AG04449 (cell line): ENCODE measurements at regions of chr5 and their contacts with region 1.

Region 1: DNA sequence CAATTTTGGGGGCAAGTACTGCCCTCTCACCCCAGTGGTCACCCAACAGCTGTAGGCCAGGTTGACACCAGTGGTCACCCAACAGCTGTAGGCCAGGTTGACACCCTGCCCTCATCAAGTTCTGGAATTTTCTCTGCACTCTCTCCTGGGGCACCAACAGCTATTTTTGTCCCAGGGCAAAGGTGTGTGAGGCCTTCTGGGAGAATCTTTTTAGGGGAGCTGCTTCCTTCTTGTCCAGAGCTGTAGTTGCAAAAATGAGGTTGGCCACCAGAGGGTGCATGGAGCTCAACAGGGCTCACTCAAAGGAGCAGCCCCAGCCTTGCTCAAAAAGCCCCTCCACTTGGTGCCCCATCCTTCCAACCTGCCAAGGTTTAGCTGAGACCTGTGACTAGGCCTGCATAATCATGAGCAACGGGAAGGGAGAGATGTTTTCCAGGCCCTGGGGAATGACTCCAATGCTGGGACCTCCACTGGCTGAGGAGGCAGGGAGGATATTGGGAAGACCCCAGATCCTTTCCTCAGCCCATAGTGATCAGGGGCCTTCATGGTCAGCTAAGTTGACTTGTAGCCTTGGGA is 10.6 kb upstream of the P4HA2 start:
- DNase-seq: no peak
- H3K4me3 ChIP-seq: no peak overlapping the region
- CTCF ChIP-seq: peak; percentile 85

Region 2: DNA sequence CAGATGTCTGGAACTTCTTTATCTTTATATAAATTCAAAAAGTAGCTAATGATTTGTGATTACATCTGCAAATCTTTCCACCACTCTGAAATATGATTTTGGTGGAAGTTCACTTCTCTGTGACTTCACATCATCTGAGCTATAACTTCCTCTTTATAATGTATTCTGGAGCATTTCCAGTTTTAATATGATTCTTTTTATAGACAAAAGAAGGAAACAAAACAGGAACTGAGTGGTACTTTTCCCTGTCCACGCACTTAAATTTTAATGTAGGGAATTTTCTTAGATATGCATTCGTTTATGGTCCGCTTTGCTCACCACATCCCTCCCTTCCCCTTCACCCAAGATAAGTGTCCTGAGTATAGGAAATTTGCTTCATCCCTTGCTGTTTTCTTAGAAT is 2000.5 kb before region 1 on chr5:
- CTCF ChIA-PET with region 1: no interaction called
- POLR2A ChIA-PET with region 1: no interaction called
- DNase-seq: no peak
- H3K4me3 ChIP-seq: no peak overlapping the region
- CTCF ChIP-seq: no peak

Region 3: GRCh38 chr5:132190161-132190817 is 48.0 kb before region 1 on chr5:
- CTCF ChIA-PET with region 1: interaction called, 13 read pairs
- POLR2A ChIA-PET with region 1: no interaction called
- DNase-seq: peak; percentile 17
- H3K4me3 ChIP-seq: no peak overlapping the region
- CTCF ChIP-seq: peak; percentile 81

Region 4: DNA sequence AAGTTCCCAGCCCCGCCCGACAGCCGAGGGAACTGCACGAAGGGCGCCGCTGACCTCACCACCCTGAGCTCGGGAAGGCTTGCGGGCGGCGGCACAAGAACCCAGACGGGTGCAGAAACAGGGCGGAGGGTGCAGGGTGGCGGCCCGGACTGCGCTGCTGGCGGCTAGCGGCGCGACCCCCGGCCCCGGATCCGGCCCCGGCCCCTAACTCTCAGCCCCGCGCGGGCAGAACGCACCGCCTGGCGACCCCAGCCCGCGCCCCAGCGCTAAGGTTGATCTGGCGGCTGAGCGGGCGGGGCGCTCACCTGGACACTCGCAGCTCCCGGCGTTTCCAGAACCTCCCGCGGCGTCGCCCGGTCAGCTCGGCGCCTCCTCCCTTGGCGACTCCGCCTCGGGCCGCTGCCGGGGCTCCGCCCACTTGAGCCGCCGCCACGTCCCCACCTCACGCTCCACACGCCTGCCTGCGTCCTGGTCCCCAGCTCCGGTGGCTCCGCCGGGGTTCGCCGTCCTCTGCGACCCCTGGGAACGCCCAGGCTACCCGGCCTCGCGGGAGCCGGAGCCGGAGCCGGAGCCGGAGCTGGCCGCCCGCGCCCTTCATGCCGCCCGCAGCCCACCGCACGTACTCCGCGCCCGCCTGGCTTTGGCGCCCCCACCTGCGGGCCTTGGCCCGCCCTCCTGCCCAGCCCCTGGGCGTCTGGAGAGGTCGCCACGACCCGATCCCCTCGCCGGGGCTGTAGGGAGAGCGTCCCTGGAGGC is 10.6 kb before region 1 on chr5 and contains the start of gene P4HA2:
- CTCF ChIA-PET with region 1: interaction called, 78 read pairs
- POLR2A ChIA-PET with region 1: interaction called, 5 read pairs
- DNase-seq: no peak
- H3K4me3 ChIP-seq: peak within 1 kb of the TSS; percentile 70
- CTCF ChIP-seq: no peak

Region 5: GRCh38 chr5:132277971-132278911 is 40.0 kb after region 1 on chr5:
- CTCF ChIA-PET with region 1: interaction called, 36 read pairs
- POLR2A ChIA-PET with region 1: interaction called, 3 read pairs
- DNase-seq: no peak
- H3K4me3 ChIP-seq: no peak overlapping the region
- CTCF ChIP-seq: no peak

Region 6: DNA sequence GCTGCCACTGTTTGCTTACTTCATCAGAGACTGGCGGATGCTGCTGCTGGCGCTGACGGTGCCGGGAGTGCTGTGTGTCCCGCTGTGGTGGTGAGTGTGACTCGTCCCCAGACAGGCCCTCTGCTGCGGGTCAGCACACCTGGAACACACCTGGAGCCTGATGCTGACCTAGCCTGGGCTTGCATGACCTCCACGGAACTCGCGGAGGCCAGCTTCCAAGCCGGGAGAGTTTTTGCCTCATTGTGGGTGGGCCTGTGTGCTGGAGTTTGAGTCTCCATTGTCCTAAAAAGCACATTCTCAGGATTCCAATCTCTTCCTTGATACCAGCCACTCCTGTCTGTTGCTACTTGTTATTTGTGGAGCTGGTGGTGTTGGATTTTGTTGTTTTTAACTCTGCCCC is 84.0 kb after region 1 on chr5:
- CTCF ChIA-PET with region 1: interaction called, 14 read pairs
- POLR2A ChIA-PET with region 1: no interaction called
- DNase-seq: no peak
- H3K4me3 ChIP-seq: no peak overlapping the region
- CTCF ChIP-seq: no peak